Right cardiac atrium (tissue), 5 donors: ENCODE measurements at regions of chr6 and their contacts with region 1.

Region 1: GRCh38 chr6:4066029-4066755 is 12.7 kb downstream of the FAM217A start:
- DNase-seq: no peak
- ATAC-seq: no peak
- H3K4me3 ChIP-seq: no peak overlapping the region
- H3K27ac ChIP-seq: no peak overlapping the region
- H3K4me1 ChIP-seq: no peaks in the 10 kb centered on the region
- H3K27me3 ChIP-seq: no peaks in the 10 kb centered on the region

Region 2: DNA sequence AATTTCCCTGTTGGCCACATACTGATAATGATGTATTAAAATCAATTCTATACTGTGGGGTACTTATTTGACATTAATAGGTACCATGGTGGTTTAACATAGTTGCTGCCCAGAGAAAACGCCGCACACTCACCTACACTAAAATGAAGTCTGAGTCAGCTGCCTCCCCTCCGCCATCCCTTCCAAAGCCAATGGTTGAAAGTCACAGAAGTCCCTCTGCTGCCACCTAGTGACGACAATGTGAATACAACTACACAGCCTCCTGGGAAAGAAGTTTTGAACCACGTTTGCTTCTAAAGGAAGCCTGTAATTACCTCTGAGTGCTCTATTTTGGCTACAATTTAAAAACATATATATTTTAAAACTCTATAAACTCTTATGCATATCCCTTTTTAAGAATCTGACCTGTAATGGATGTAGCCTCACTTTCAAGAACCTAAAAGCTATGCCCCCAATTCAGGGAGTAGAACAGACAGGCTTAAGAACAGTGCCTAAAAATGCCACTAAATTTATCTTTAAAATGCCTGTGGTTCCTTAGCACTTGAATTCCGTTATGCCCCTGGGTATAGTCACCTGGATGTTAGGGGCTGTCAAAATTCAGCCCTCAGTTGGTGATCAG is 89.8 kb after region 1 on chr6:
- intact Hi-C with region 1: loop called in 1 of 4 experiments (anchors 10 kb)
- DNase-seq: peak; percentile 63 to 77 (median 66)
- ATAC-seq: peak; percentile 75 to 86
- H3K4me3 ChIP-seq: no peak overlapping the region
- H3K27ac ChIP-seq: no peak overlapping the region
- H3K4me1 ChIP-seq: no peaks in the 10 kb centered on the region
- H3K27me3 ChIP-seq: no peaks in the 10 kb centered on the region